Caco-2 (cell line): ENCODE measurements at regions of chr3 and their contacts with region 1.

Region 1: GRCh38 chr3:29503958-29504357 is 223.1 kb downstream of the RBMS3 start:
- DNase-seq: no peak
- H3K4me3 ChIP-seq: no peak overlapping the region
- H3K4me3 Mint-ChIP-seq: no peak overlapping the region
- H3K27ac Mint-ChIP-seq: peak overlapping the region; percentile 74
- H3K4me1 ChIP-seq: peaks cover 17% of the 10 kb centered on the region; the same call in 1 of the 2 replicates
- H3K4me1 Mint-ChIP-seq: peaks cover 42% of the 10 kb centered on the region
- H3K27me3 ChIP-seq: no peaks in the 10 kb centered on the region
- H3K27me3 Mint-ChIP-seq: no peaks in the 10 kb centered on the region
- CTCF ChIP-seq: no peak

Region 2: DNA sequence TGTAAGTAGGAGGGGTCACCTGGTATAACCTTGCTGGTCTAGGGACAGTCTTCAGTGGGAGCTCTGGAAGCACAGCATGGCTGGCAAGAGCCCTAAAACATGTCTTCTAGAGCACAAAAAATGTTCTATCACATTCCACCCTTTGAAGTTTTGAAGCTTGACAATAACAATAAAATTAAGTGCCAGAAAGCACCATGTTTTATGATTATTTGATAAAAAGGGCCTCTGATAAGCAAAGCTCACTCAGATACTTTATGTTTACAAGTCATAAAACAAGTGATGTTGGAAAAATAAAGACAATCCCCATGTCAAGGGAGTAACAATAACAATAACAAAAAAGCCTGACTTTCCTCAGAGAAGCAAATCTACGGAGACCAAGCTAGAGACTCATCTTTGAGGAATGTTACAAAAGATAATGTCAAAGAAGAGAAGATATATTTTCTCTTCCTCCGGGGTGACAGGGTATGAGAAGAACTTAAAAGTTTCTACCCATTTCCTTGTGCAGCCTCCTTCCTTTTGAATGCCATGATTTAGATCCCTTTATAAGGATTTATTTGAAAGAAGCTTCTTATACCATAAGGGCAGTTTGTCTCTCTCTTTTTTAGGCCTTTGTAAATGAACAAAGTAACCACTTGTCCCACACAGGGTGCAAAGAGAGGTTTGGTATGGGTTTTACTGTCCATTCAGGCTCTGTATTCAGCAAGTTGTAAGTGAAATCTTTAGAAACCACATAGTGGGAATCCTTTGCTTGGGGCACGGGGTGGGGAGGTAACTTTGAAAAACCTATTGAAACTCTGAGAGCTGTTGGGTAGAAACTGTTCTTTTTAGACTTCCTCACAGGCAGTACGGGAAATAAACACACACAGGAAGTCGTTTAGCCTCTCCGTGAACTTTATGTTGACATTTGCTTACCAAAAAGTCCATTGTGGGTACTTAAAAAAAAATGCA is 332.6 kb before region 1 on chr3:
- CTCF ChIA-PET with region 1: no interaction called
- POLR2A ChIA-PET with region 1: no interaction called
- intact Hi-C with region 1: loop called (anchors 1 kb)
- DNase-seq: peak; percentile 43 to 48
- H3K4me3 ChIP-seq: no peak overlapping the region
- H3K4me3 Mint-ChIP-seq: no peak overlapping the region
- H3K27ac Mint-ChIP-seq: no peak overlapping the region
- H3K4me1 ChIP-seq: peaks cover 15% of the 10 kb centered on the region; the same call in 1 of the 2 replicates
- H3K4me1 Mint-ChIP-seq: peaks cover 10% of the 10 kb centered on the region
- H3K27me3 ChIP-seq: no peaks in the 10 kb centered on the region
- H3K27me3 Mint-ChIP-seq: no peaks in the 10 kb centered on the region
- CTCF ChIP-seq: no peak

Region 3: DNA sequence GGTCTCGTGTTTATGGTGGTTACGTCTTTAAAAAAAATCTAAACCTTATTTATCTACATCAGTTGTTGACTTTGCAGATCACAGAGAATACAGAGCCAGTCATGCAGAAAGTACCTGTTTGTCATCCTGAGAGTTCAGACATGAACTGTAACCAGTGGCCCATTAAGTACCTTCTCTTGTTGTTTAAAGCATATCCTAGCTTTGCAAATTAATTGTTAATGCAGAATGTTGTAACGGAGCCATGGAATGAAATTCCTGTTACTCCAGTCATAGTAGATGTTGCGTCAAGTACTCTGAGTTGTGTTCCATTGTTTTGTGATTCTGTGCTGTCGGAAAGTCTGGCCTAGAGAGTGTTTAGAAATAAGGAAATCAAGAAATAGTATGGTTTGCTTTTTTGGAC is 17.9 kb before region 1 on chr3:
- CTCF ChIA-PET with region 1: no interaction called
- POLR2A ChIA-PET with region 1: no interaction called
- intact Hi-C with region 1: loop called (anchors 1 kb)
- DNase-seq: no peak
- H3K4me3 ChIP-seq: no peak overlapping the region
- H3K4me3 Mint-ChIP-seq: no peak overlapping the region
- H3K27ac Mint-ChIP-seq: no peak overlapping the region
- H3K4me1 ChIP-seq: no peaks in the 10 kb centered on the region
- H3K4me1 Mint-ChIP-seq: peaks cover 7% of the 10 kb centered on the region
- H3K27me3 ChIP-seq: no peaks in the 10 kb centered on the region
- H3K27me3 Mint-ChIP-seq: no peaks in the 10 kb centered on the region
- CTCF ChIP-seq: no peak

Region 4: DNA sequence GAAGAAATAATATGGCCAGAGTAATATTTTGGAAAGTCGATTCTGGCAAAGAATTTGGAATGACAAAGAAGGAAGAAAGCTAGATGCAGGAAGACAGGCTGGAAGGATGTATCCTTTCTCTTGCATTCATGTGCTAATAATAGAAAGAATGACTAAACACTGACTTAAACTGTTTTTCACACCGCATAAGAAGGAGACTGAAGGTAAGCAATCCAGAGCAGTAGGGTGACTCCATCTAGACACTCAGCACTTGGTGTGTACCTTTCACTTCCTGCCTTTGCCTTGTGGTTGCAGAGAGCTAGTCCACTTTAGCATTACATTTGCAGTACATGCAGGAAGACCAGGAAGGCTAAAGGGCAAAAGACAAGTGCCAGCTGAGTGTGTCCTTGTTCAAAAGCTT is 11.5 kb after region 1 on chr3:
- CTCF ChIA-PET with region 1: no interaction called
- POLR2A ChIA-PET with region 1: interaction called, 3 read pairs
- intact Hi-C with region 1: loop called (anchors 1 kb)
- DNase-seq: no peak
- H3K4me3 ChIP-seq: no peak overlapping the region
- H3K4me3 Mint-ChIP-seq: no peak overlapping the region
- H3K27ac Mint-ChIP-seq: no peak overlapping the region
- H3K4me1 ChIP-seq: peaks cover 11% of the 10 kb centered on the region; the same call in 1 of the 2 replicates
- H3K4me1 Mint-ChIP-seq: peaks cover 18% of the 10 kb centered on the region
- H3K27me3 ChIP-seq: no peaks in the 10 kb centered on the region
- H3K27me3 Mint-ChIP-seq: no peaks in the 10 kb centered on the region
- CTCF ChIP-seq: no peak